ENCODE measurements at regions of chr15 and their contacts with region 1.

Region 1: DNA sequence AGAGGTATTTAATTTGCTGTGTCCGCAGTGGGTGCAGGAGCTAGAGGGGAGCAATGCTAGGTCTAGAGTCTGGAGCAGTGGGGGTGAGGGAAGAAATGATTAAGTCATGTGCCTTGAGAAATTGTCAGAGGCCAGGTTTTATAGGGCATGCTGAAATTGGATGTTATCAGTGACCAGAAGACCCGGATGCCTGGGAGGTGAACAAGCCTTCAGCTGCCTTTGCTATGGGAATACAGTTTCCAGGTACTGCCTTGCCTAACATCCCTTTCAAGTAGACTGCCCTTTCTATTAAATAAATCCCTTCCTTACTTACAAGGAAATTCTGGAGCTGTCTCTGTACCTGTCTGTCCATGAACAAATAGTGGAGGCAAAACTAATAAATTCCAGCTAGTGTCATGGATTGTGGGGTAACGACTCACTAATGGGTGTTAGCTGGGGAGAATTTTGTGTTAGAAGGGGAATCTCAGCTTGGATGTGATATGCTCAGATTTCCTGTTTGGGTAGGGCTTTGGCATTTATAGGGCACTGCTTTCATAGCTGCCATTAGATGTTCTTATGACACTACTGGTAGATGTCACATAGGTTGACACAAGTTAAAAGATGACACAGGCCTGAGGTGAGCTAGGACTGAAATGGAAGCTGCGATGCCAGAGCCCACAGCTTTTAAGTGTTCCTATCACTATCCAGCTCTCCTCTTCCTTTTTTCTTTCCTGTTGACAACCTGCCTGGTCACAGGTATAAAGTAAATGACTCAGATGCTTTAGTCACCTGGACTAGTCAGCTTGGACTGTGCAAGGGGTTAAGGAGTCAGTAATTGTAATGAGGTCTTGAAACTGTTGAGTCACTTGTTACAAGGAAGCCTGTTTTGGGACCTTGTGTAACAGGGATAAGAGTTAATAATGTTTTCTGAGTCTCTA is 21.3 kb downstream of the CHD2 start:
- DNase-seq: no peak
- H3K4me3 ChIP-seq: no peak overlapping the region
- H3K27ac ChIP-seq: peak overlapping the region; percentile 5 to 98 (median 44)
- H3K4me1 ChIP-seq: peaks cover 65 to 88% of the 10 kb centered on the region in 2 donors
- H3K27me3 ChIP-seq: no peaks in the 10 kb centered on the region
- CTCF ChIP-seq: no peak
- POLR2A ChIP-seq: no peak

Region 2: DNA sequence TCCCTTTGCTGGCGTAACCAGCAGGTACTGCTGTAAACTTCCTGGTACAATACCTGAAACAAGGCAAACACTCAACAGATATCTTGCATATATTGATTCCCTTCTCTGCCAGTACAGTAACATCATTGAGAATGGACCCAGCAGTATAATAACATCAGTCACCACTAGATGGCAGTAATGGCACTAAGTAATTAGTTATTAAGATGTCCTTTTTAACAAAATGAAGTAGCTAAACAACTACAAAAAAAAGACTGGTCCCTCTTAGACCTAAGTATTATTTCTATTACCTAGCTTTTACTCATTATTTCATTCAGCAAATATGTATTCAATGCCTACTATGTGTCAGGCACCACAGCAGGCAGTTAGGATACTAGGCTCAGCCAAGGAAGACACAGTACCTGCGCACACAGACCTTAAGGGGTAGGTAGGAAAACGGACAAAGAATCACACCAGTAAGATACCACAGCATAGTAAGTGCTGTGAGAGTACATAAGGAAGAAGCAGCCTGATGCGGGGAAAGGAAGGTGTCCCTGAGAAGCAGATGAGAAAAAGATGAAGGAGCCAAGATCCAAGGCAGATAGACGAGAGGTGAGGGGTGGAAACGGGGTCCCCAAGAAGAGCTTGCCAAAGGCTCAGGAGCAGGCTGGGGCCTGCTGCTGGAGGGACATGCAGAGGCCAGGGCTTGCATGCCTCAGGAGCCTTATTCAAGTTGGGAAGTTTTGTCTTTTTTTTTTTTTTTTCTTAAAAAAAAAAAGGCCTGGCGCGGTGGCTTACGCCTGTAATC is 124.1 kb before region 1 on chr15:
- intact Hi-C with region 1: loop called (anchors 5 kb)
- DNase-seq: no peak
- H3K4me3 ChIP-seq: no peak overlapping the region
- H3K27ac ChIP-seq: peak overlapping the region in 2 of 3 donors; percentile 41 to 51
- H3K4me1 ChIP-seq: peaks cover 0 to 10% of the 10 kb centered on the region in 2 donors
- H3K27me3 ChIP-seq: no peaks in the 10 kb centered on the region
- CTCF ChIP-seq: peak; percentile 55 to 85 (median 62)
- POLR2A ChIP-seq: no peak